ENCODE measurements at regions of chr17 and their contacts with region 1.

Region 1: DNA sequence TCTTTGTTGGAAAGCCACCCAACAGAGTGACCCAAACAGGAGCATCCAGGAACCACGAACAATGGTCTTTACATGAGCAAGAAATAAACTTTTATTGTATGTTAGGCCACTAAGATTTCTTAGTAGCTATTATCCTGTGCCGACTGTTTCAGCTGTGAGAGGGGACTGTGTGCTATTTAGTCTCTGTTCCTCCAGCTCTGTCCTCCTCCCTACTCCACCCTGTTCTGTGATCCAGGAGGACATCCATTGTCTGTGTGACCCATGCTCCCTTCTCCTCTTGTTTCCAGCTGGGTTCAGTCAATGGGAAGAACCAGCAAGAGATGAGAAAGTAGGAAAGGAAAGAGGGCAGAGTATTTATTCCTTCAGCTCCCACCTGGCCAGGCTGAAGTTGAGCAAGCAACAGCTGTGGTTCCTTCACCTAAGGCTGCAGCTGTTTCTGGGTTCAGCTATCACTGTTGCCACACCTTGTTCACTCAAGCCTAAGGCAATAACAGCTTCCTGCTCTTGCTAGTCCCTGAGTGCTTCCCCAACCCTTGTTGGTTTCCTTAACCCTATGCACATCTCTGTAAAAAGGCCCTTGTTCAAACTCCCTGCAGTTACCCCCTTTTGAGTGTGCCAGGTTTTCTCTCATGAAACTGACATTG is 14.9 kb upstream of the B4GALNT2 start:
- DNase-seq: no peak
- ATAC-seq: no peak
- H3K4me3 ChIP-seq: no peak overlapping the region
- H3K27ac ChIP-seq: 0 out of 6 replicates have a peak overlapping the region, but pooled peaks of 1 of the 2 experiments have one; percentile 6
- H3K4me1 ChIP-seq: no peaks in the 10 kb centered on the region
- CTCF ChIP-seq: no peak
- EP300 ChIP-seq: no peak
- POLR2A ChIP-seq: no peak
- RAD21 ChIP-seq: no peak

Region 2: GRCh38 chr17:49063652-49064051 is 54.1 kb before region 1 on chr17:
- CTCF ChIA-PET with region 1: no interaction called
- POLR2A ChIA-PET with region 1: no interaction called
- DNase-seq: no peak
- ATAC-seq: no peak
- H3K4me3 ChIP-seq: no peak overlapping the region
- H3K27ac ChIP-seq: no peak overlapping the region
- H3K4me1 ChIP-seq: peaks cover 4% of the 10 kb centered on the region
- CTCF ChIP-seq: no peak
- EP300 ChIP-seq: no peak
- POLR2A ChIP-seq: no peak
- RAD21 ChIP-seq: no peak

Region 3: GRCh38 chr17:49101054-49101947 is 16.4 kb before region 1 on chr17:
- CTCF ChIA-PET with region 1: interaction called, 14 read pairs
- POLR2A ChIA-PET with region 1: no interaction called
- DNase-seq: no peak
- ATAC-seq: peak; percentile 53 to 54
- H3K4me3 ChIP-seq: no peak overlapping the region
- H3K27ac ChIP-seq: peak overlapping the region; percentile 59 to 83
- H3K4me1 ChIP-seq: peaks cover 32% of the 10 kb centered on the region
- CTCF ChIP-seq: no peak
- EP300 ChIP-seq: no peak
- POLR2A ChIP-seq: no peak
- RAD21 ChIP-seq: no peak